Esophagus squamous epithelium (tissue), 5 donors: ENCODE measurements at regions of chr7 and their contacts with region 1.

Region 1: DNA sequence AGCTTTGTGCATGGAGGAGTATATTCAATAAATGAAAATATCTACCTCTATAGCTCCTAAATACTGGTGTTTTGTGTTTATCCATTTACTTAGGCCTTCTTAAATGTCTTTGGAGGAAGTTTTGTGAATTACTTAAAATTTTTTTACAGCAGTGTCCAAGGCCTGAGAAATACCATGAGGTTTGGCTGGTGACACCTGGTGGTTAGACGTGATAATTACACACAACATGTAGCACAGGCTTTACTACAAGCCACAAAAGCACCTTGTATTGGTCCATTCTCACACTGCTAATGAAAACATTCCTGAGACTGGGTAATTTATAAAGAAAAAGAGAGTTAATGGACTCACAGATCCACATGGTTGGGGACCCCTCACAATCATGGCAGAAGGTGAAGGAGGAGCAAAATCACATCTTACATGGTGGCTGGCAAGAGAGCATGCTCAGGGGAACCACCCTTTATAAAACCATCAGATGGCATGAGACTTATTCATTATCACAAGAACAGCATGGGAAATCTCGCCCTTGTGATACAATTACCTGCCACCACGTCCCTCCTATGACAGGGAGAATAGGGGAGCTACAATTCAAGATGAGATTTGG is 20.6 kb downstream of the HYAL4 start:
- DNase-seq: no peak
- H3K4me3 ChIP-seq: no peak overlapping the region
- H3K27ac ChIP-seq: no peak overlapping the region
- H3K4me1 ChIP-seq: no peaks in the 10 kb centered on the region
- H3K27me3 ChIP-seq: no peaks in the 10 kb centered on the region
- CTCF ChIP-seq: peak; percentile 54 to 83 (median 72)
- POLR2A ChIP-seq: no peak

Region 2: DNA sequence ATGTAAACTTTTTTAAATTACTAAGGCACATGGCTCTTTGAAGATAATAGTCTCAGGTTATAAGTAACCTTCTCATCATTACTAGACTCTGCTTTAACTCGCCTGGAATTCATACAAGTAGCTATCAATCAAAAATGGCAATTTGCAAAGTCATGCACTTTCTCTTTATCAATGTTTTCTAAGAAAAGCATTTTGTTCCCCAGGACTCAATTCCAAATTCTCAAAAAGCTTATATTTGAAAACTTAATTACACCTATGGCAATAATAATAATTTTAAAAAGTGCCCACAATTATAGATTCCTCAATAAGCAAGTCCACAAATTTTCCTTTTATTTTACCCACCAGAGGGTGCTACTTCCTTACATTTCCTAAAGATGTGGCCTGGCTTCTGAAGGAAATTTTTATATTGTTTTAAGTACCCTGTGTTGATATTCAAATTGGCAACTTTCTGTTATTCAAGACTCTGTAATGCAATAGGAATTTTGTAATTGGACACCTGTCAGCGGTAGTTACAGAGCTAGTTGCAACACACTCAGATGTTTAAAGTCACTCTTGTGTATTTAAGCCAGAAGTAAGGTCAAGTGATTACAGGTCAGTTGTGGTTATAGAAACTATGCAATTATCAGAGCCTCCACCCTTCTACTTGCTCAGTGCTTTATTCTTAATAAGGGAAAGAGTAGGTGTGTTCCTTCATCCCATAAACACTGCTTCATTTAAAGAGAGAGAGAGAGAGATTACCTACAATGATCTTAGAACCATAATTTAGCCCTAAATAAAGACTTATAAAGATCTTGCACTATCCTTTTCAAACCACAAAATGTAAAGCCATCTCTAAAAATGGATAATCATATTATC is 67.7 kb before region 1 on chr7:
- intact Hi-C with region 1: loop called (anchors 10 kb)
- DNase-seq: no peak
- H3K4me3 ChIP-seq: peak overlapping the region in 1 of 4 donors; percentile 22
- H3K27ac ChIP-seq: peak overlapping the region in 1 of 4 donors; percentile 38
- H3K4me1 ChIP-seq: peaks cover 0 to 10% (median 3%) of the 10 kb centered on the region in 3 donors
- H3K27me3 ChIP-seq: no peaks in the 10 kb centered on the region
- CTCF ChIP-seq: peak in 5 of 6 experiments; percentile 41 to 70 (median 52)
- POLR2A ChIP-seq: no peak